H1 (cell line): ENCODE measurements at regions of chr19 and their contacts with region 1.

Region 1: GRCh38 chr19:20051841-20052768 is 12.8 kb upstream of the ZNF682 start:
- DNase-seq: peak; percentile 91 to 100
- H3K4me3 ChIP-seq: peak overlapping the region; percentile 76 to 87 (median 82)
- H3K27ac ChIP-seq: peak overlapping the region; percentile 87
- H3K4me1 ChIP-seq: peaks cover 0 to 3% (median 0%) of the 10 kb centered on the region in 4 experiments; a peak in 1 of 7 replicates
- H3K27me3 ChIP-seq: no peaks in the 10 kb centered on the region
- CTCF ChIP-seq: peak; percentile 8 to 19 (median 19); a peak in 2 of 4 replicates
- EP300 ChIP-seq: no peak
- POLR2A ChIP-seq: peak; percentile 66 to 78
- RAD21 ChIP-seq: peak; percentile 1 to 2; a peak in 2 of 4 replicates

Region 2: DNA sequence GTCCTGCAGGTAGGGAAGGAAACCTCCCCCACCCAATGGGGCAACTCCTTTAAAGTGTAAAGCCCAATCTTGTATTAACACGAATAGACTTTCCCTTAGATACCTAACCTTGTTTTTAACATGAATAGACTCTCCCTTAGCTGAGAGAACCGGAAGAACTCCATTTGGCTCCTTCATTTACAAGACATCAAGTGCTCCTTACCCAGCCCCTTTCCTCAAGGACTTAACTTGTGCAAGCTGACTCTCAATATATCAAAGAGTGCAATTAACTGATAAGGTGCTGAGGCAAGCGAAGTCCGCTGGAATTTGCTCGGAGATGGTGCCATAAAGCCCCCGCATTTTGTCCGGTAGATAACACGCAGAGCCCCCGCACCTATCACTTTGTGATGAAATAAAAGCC is 15.8 kb after region 1 on chr19:
- CTCF ChIA-PET with region 1: interaction called, 3 read pairs
- POLR2A ChIA-PET with region 1: interaction called, 56 read pairs
- DNase-seq: no peak
- H3K4me3 ChIP-seq: peak overlapping the region in 1 of 4 experiments; percentile 11; a peak in 1 of 8 replicates
- H3K27ac ChIP-seq: no peak overlapping the region
- H3K4me1 ChIP-seq: peaks cover 2 to 20% (median 12%) of the 10 kb centered on the region in 4 experiments
- H3K27me3 ChIP-seq: no peaks in the 10 kb centered on the region
- CTCF ChIP-seq: no peak
- EP300 ChIP-seq: no peak
- POLR2A ChIP-seq: no peak
- RAD21 ChIP-seq: no peak

Region 3: GRCh38 chr19:20077791-20078463 is 25.8 kb after region 1 on chr19 and contains the start of gene ZNF90:
- CTCF ChIA-PET with region 1: interaction called, 4 read pairs
- POLR2A ChIA-PET with region 1: interaction called, 33 read pairs
- DNase-seq: peak; percentile 84 to 96
- H3K4me3 ChIP-seq: peak within 1 kb of the TSS; percentile 89 to 99 (median 96)
- H3K27ac ChIP-seq: peak within 1 kb of the TSS; percentile 93
- H3K4me1 ChIP-seq: peaks cover 9 to 23% (median 18%) of the 10 kb centered on the region in 4 experiments; a peak in 6 of 7 replicates
- H3K27me3 ChIP-seq: no peaks in the 10 kb centered on the region
- CTCF ChIP-seq: peak in 1 of 3 experiments; percentile 6; a peak in 1 of 4 replicates
- EP300 ChIP-seq: no peak
- POLR2A ChIP-seq: peak; percentile 79 to 88
- RAD21 ChIP-seq: peak in 1 of 2 experiments; percentile 8; a peak in 1 of 4 replicates
- total RNA-seq, gene ZNF90: 105 and 114 TPM in 2 replicates

Region 4: DNA sequence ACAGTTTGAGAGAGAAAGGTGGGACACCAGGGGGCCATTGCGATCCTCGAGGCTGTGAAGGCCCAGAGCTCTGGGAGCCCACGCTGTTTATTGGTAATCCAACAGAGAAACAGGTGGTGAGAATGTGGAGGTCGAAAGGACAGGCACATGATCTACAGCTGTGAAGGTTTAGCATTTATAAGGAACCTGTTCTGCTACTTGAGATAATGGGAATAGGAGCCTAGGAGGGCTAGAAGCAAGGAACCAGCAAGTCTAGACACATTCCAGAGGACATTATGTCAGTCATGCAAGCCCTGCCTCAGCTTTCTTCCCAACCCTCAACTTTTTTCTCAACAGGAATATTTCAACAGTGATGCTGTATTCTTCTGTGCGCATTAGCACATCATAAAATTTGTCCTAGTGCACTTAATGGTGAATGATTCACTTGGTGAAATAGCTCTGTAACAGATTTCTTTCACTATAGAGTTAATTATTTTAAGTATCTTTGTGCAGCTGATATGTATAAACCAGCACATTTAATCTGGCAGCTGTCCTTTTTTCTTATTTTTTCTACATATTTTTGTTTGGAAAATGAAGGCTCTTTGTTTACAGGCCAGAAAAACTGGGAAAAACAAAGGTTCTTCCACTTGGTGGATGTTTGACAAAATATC is 51.1 kb after region 1 on chr19:
- CTCF ChIA-PET with region 1: interaction called, 3 read pairs
- POLR2A ChIA-PET with region 1: interaction called, 32 read pairs
- DNase-seq: peak in 1 of 2 experiments; percentile 54
- H3K4me3 ChIP-seq: no peak overlapping the region; a peak in 1 of 8 replicates
- H3K27ac ChIP-seq: no peak overlapping the region
- H3K4me1 ChIP-seq: peaks cover 0 to 2% (median 0%) of the 10 kb centered on the region in 4 experiments; a peak in 2 of 7 replicates
- H3K27me3 ChIP-seq: no peaks in the 10 kb centered on the region
- CTCF ChIP-seq: no peak
- EP300 ChIP-seq: no peak
- POLR2A ChIP-seq: no peak
- RAD21 ChIP-seq: peak in 1 of 2 experiments; percentile 18; a peak in 1 of 4 replicates